ENCODE measurements at regions of chr1 and their contacts with region 1.

Region 1: GRCh38 chr1:248906009-248906752 is at the start of gene PGBD2:
- DNase-seq: peak; percentile 89
- ATAC-seq: peak; percentile 93
- H3K4me3 ChIP-seq: peak within 1 kb of the TSS; percentile 69 to 80
- H3K27ac ChIP-seq: peak within 1 kb of the TSS; percentile 77
- H3K4me1 ChIP-seq: peaks cover 0 to 22% of the 10 kb centered on the region in 2 experiments; a peak in 3 of 4 replicates
- H3K27me3 ChIP-seq: no peaks in the 10 kb centered on the region
- CTCF ChIP-seq: peak; percentile 61 to 82 (median 64)
- POLR2A ChIP-seq: peak; percentile 72
- RAD21 ChIP-seq: peak; percentile 68
- total RNA-seq, gene PGBD2: 5.1 TPM

Region 2: GRCh38 chr1:248873409-248873992 is 32.7 kb before region 1 on chr1:
- CTCF ChIA-PET with region 1: no interaction called
- POLR2A ChIA-PET with region 1: interaction called, 7 read pairs
- RAD21 ChIA-PET with region 1: no interaction called
- intact Hi-C with region 1: loop called (anchors 1 kb)
- DNase-seq: peak; percentile 93
- ATAC-seq: peak; percentile 82
- H3K4me3 ChIP-seq: peak overlapping the region; percentile 51 to 64
- H3K27ac ChIP-seq: peak overlapping the region; percentile 74
- H3K4me1 ChIP-seq: peaks cover 10 to 25% of the 10 kb centered on the region in 2 experiments
- H3K27me3 ChIP-seq: no peaks in the 10 kb centered on the region
- CTCF ChIP-seq: no peak
- POLR2A ChIP-seq: no peak
- RAD21 ChIP-seq: no peak

Region 3: DNA sequence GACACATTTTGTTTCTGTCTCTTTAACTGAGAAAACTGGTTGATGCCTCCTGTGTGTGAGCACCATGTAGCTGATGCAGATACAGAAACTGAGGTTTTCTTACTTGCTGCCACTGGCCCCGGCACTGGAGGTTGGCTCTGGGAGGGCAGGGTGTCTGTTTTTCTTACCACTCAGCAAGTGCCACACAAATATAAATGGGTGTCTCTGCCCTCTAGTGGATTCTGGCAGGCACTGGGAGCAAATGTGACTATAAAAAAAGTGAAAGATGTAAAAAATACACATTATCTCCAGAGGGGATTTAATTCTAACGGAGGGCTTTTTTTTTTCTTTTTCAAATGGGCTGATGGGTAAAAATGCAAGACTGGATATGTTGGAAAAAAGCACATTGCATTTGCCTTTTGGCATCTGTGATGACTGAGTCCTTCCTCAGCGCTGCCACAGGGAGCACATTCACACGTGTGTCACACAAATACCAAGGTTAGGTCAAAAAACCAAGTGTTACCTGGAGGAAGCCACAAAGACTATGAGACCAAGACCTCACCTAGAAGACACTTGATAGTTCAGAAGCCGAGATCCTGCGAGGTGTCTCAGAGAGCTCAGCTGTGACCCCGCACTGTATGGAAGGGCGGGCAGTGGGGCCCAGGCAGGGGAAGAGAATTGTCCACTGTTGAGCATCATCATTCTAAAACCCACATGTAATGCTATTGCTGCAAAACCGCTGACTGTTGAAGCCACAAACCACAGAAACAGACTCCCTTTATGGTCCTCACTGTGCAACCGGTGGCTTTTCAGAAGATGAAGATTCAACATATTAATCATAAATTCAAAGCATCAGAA is 18.7 kb after region 1 on chr1:
- CTCF ChIA-PET with region 1: no interaction called
- POLR2A ChIA-PET with region 1: no interaction called
- RAD21 ChIA-PET with region 1: no interaction called
- intact Hi-C with region 1: no loop called
- DNase-seq: peak; percentile 40
- ATAC-seq: peak; percentile 98
- H3K4me3 ChIP-seq: no peak overlapping the region
- H3K27ac ChIP-seq: no peak overlapping the region
- H3K4me1 ChIP-seq: no peaks in the 10 kb centered on the region
- H3K27me3 ChIP-seq: no peaks in the 10 kb centered on the region
- CTCF ChIP-seq: peak; percentile 70 to 74 (median 72); a peak in 5 of 6 replicates
- POLR2A ChIP-seq: no peak
- RAD21 ChIP-seq: peak; percentile 83